K562 (cell line): ENCODE measurements at regions of chr10 and their contacts with region 1.

Region 1: DNA sequence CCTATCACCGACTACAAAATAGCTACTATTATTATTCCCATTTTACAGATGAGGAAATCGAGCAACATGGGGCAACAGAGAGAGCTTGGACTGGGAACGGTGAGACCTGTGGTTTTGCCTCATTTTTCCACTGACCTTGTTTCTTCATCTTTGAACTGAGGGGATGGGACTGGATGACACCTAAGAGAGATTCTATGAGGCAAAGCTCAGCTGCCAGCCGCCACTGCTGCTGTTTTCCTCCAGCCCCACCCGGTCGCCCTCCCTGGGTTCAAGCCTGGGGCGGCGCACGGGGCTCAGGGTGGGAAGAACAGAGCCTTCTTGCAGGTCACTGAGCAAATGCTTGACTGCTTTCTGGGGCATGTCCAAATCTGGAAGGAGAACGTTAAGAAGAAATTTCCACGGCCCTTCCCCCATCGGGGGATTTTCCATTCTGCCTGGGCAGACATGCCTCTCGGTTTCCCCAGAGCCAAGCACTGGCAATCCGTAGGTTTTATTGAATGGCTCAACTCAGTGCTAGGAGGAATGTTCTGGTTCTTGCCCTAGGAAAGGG is 12.3 kb downstream of the DDIT4 start:
- DNase-seq: peak in 2 of 4 experiments; percentile 6 to 14
- ATAC-seq: no peak; the same call in 1 of the 3 replicates
- H3K4me3 ChIP-seq: no peak overlapping the region
- H3K27ac ChIP-seq: no peak overlapping the region
- H3K4me1 ChIP-seq: peaks cover 12 to 24% of the 10 kb centered on the region in 2 experiments
- H3K27me3 ChIP-seq: no peaks in the 10 kb centered on the region
- CTCF ChIP-seq: no peak
- EP300 ChIP-seq: no peak
- POLR2A ChIP-seq: no peak
- RAD21 ChIP-seq: no peak

Region 2: DNA sequence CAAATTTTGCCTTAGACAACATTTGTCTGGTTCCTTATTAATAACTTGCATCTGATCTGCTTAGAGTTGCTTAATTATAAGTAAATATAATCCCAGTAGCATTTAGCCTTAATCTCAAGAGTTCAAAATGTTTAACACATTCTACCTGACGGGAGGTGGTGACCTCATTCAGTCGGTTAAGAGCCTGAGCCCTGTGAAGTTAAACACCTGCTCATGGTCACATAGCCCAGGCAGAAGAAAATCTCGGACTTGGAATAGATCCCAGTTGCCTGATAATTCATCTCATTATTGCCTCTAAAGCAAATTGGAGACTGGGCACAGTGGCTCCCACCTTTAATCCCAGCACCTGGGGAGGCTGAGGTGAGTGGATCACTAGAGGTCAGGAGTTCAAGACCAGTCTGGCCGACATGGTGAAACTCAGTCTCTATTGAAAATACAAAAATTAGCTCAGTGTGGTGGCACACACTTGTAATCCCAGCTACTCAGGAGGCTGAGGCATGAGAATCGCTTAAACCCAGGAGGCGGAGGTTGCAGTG is 51.4 kb before region 1 on chr10:
- CTCF ChIA-PET with region 1: no interaction called
- POLR2A ChIA-PET with region 1: no interaction called
- in situ Hi-C with region 1: no loop called
- intact Hi-C with region 1: no loop called
- DNase-seq: no peak
- ATAC-seq: no peak
- H3K4me3 ChIP-seq: no peak overlapping the region
- H3K27ac ChIP-seq: no peak overlapping the region
- H3K4me1 ChIP-seq: no peaks in the 10 kb centered on the region; a peak in 2 of 5 replicates
- H3K27me3 ChIP-seq: no peaks in the 10 kb centered on the region
- CTCF ChIP-seq: no peak
- EP300 ChIP-seq: no peak
- POLR2A ChIP-seq: no peak
- RAD21 ChIP-seq: no peak

Region 3: GRCh38 chr10:72297968-72298773 is 12.1 kb after region 1 on chr10:
- CTCF ChIA-PET with region 1: interaction called, 3 read pairs
- POLR2A ChIA-PET with region 1: interaction called, 11 read pairs
- in situ Hi-C with region 1: no loop called
- intact Hi-C with region 1: no loop called
- DNase-seq: peak; percentile 98 to 100 (median 100)
- ATAC-seq: peak; percentile 96
- H3K4me3 ChIP-seq: peak overlapping the region; percentile 55
- H3K27ac ChIP-seq: peak overlapping the region; percentile 94
- H3K4me1 ChIP-seq: peaks cover 32 to 40% of the 10 kb centered on the region in 2 experiments
- H3K27me3 ChIP-seq: no peaks in the 10 kb centered on the region; a peak in 1 of 5 replicates
- CTCF ChIP-seq: peak in 2 of 3 experiments; percentile 19 to 32; a peak in 4 of 6 replicates
- EP300 ChIP-seq: no peak
- POLR2A ChIP-seq: peak; percentile 53
- RAD21 ChIP-seq: peak in 1 of 2 experiments; percentile 43; a peak in 2 of 4 replicates

Region 4: GRCh38 chr10:72821606-72822005 is 535.6 kb after region 1 on chr10:
- CTCF ChIA-PET with region 1: no interaction called
- POLR2A ChIA-PET with region 1: no interaction called
- in situ Hi-C with region 1: no loop called
- intact Hi-C with region 1: no loop called
- DNase-seq: no peak
- ATAC-seq: no peak
- H3K4me3 ChIP-seq: no peak overlapping the region
- H3K27ac ChIP-seq: no peak overlapping the region
- H3K4me1 ChIP-seq: no peaks in the 10 kb centered on the region
- H3K27me3 ChIP-seq: no peaks in the 10 kb centered on the region
- CTCF ChIP-seq: no peak
- EP300 ChIP-seq: no peak
- POLR2A ChIP-seq: no peak
- RAD21 ChIP-seq: no peak